GM12878 (cell line): ENCODE measurements at regions of chr11 and their contacts with region 1.

Region 1: DNA sequence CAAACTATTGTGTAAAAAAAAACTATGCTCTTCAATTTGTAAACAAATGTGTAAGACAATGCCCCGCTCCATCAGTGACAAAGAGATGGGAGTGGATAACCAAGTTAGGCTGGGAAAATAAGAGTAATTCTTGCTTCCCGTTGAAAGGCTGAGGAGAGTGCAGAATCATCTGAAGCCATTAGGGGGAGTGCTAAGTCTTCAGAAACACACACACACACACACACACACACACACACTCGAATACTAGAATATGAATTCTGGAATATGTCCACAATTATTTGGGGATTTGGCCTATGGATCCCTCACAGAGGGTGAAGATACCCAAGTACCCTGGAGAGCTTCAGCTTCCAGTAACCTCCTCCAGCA is 27.8 kb upstream of the ROBO3 start:
- DNase-seq: peak; percentile 2
- ATAC-seq: peak; percentile 67
- H3K4me3 ChIP-seq: no peak overlapping the region
- H3K27ac ChIP-seq: no peak overlapping the region
- H3K4me1 ChIP-seq: no peaks in the 10 kb centered on the region
- H3K27me3 ChIP-seq: peaks cover 16 to 17% of the 10 kb centered on the region in 2 experiments
- CTCF ChIP-seq: peak; percentile 41 to 60 (median 54)
- EP300 ChIP-seq: no peak
- POLR2A ChIP-seq: no peak
- RAD21 ChIP-seq: peak; percentile 46

Region 2: GRCh38 chr11:124644426-124645280 is 192.8 kb before region 1 on chr11:
- CTCF ChIA-PET with region 1: interaction called, 31 read pairs
- POLR2A ChIA-PET with region 1: no interaction called
- RAD21 ChIA-PET with region 1: interaction called, 7 read pairs
- SMC1A ChIA-PET with region 1: interaction called, 9 read pairs
- in situ Hi-C with region 1: no loop called
- intact Hi-C with region 1: loop called (anchors 1 kb)
- DNase-seq: no peak
- ATAC-seq: peak; percentile 71
- H3K4me3 ChIP-seq: no peak overlapping the region
- H3K27ac ChIP-seq: no peak overlapping the region
- H3K4me1 ChIP-seq: no peaks in the 10 kb centered on the region; the same call in 1 of the 2 replicates
- H3K27me3 ChIP-seq: no peaks in the 10 kb centered on the region
- CTCF ChIP-seq: peak; percentile 72 to 89 (median 77)
- EP300 ChIP-seq: no peak
- POLR2A ChIP-seq: no peak
- RAD21 ChIP-seq: peak; percentile 77